PC-3 (cell line): ENCODE measurements at regions of chr20 and their contacts with region 1.

Region 1: GRCh38 chr20:4613718-4614620 is 107.7 kb upstream of the PRND start:
- DNase-seq: peak; percentile 79
- ATAC-seq: peak; percentile 91
- H3K4me3 ChIP-seq: no peak overlapping the region
- H3K27ac ChIP-seq: no peak overlapping the region
- H3K4me1 ChIP-seq: peaks cover 10% of the 10 kb centered on the region
- H3K27me3 ChIP-seq: no peaks in the 10 kb centered on the region
- CTCF ChIP-seq: peak; percentile 83

Region 2: DNA sequence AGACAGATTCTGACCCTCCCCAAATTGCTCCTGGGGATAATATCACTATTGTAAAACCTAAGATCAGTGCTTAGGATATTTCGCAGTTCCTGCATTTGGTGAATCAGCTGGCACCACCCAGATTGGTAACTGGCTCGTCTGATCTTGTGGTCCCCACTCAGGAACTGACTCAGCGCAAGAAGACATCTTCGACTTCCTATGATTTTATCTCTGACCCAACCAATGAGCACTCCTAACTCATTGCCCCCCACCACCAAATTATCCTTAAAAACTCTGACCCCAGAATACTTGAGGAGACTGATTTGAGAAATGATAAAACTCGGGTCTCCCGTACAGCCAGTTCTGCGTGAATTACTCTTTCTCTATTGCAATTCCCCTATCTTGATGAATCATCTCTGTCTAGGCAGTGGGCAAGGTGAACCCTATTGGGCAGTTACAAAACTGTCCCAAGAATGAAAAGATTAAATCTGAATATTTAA is 52.1 kb after region 1 on chr20:
- CTCF ChIA-PET with region 1: no interaction called
- POLR2A ChIA-PET with region 1: no interaction called
- intact Hi-C with region 1: loop called (anchors 5 kb)
- DNase-seq: peak; percentile 92
- ATAC-seq: peak; percentile 95
- H3K4me3 ChIP-seq: peak overlapping the region; percentile 43; the same call in 1 of the 2 replicates
- H3K27ac ChIP-seq: peak overlapping the region; percentile 69
- H3K4me1 ChIP-seq: peaks cover 19% of the 10 kb centered on the region
- H3K27me3 ChIP-seq: no peaks in the 10 kb centered on the region
- CTCF ChIP-seq: no peak

Region 3: GRCh38 chr20:4713401-4713800 is 99.4 kb after region 1 on chr20:
- CTCF ChIA-PET with region 1: interaction called, 11 read pairs
- POLR2A ChIA-PET with region 1: interaction called, 5 read pairs
- intact Hi-C with region 1: no loop called
- DNase-seq: peak; percentile 98
- ATAC-seq: peak; percentile 97
- H3K4me3 ChIP-seq: no peak overlapping the region
- H3K27ac ChIP-seq: peak overlapping the region; percentile 60
- H3K4me1 ChIP-seq: peaks cover 12% of the 10 kb centered on the region
- H3K27me3 ChIP-seq: no peaks in the 10 kb centered on the region
- CTCF ChIP-seq: no peak

Region 4: GRCh38 chr20:4720041-4720976 is 106.3 kb after region 1 on chr20:
- CTCF ChIA-PET with region 1: interaction called, 17 read pairs
- POLR2A ChIA-PET with region 1: interaction called, 5 read pairs
- intact Hi-C with region 1: loop called (anchors 1 kb)
- DNase-seq: peak; percentile 85
- ATAC-seq: peak; percentile 78
- H3K4me3 ChIP-seq: peak overlapping the region; percentile 46; the same call in 1 of the 2 replicates
- H3K27ac ChIP-seq: no peak overlapping the region
- H3K4me1 ChIP-seq: no peaks in the 10 kb centered on the region
- H3K27me3 ChIP-seq: no peaks in the 10 kb centered on the region
- CTCF ChIP-seq: peak; percentile 95